ENCODE measurements at regions of chr11 and their contacts with region 1.

Region 1: GRCh38 chr11:32809313-32809712 is 14.9 kb upstream of the CCDC73 start:
- DNase-seq: peak; percentile 66 to 73
- H3K4me3 ChIP-seq: no peak overlapping the region
- H3K27ac ChIP-seq: no peak overlapping the region
- H3K4me1 ChIP-seq: no peaks in the 10 kb centered on the region
- H3K27me3 ChIP-seq: no peaks in the 10 kb centered on the region
- CTCF ChIP-seq: peak; percentile 94

Region 2: GRCh38 chr11:31850365-31850764 is 958.9 kb before region 1 on chr11:
- CTCF ChIA-PET with region 1: no interaction called
- POLR2A ChIA-PET with region 1: no interaction called
- intact Hi-C with region 1: loop called (anchors 5 kb)
- DNase-seq: no peak
- H3K4me3 ChIP-seq: no peak overlapping the region
- H3K27ac ChIP-seq: no peak overlapping the region
- H3K4me1 ChIP-seq: peaks cover 22% of the 10 kb centered on the region
- H3K27me3 ChIP-seq: no peaks in the 10 kb centered on the region
- CTCF ChIP-seq: no peak

Region 3: GRCh38 chr11:33147559-33147958 is 338.2 kb after region 1 on chr11:
- CTCF ChIA-PET with region 1: no interaction called
- POLR2A ChIA-PET with region 1: no interaction called
- intact Hi-C with region 1: no loop called
- DNase-seq: no peak
- H3K4me3 ChIP-seq: no peak overlapping the region
- H3K27ac ChIP-seq: 0 out of 2 replicates have a peak overlapping the region, but pooled peaks have one; percentile 29
- H3K4me1 ChIP-seq: peaks cover 19% of the 10 kb centered on the region
- H3K27me3 ChIP-seq: no peaks in the 10 kb centered on the region
- CTCF ChIP-seq: no peak

Measured in PC-9 (cell line).